Testis (tissue), 5 donors: ENCODE measurements at regions of chr11 and their contacts with region 1.

Region 1: DNA sequence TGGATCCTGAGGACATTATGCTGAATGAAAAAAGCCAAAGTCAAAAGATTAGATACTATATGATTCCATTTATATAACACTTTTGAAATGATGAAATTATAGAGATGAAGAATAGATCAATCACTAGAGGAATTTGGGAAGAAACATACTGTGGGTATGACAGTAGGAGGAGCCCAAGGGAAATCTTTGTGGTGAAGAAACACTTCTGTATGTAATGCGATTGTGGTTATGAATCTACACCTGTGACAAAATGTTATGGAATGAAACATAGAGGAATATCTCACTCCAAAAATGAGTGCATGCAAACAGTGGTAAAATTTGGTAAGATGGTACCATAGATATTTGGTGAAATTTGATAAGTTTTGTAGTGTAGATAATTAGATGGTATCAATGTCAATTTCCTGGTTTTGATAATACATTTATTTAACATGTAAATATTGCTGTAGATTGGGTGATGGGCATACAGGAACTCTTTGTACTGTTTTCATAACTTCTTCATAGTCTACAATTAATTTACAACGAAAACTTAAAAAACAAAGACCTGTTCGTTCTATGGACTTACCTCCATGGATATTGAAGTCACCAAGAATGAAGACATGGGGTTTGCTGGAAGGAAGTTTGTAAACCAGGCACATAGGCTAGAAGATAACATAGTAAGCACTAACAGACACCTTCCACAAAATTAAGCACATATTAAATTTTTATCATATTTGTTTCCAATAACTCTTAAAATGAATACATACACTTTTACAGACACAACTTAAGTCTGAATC is 11.5 kb downstream of the MRGPRX1 start:
- DNase-seq: no peak
- H3K4me3 ChIP-seq: no peak overlapping the region
- H3K27ac ChIP-seq: no peak overlapping the region
- H3K4me1 ChIP-seq: no peaks in the 10 kb centered on the region
- H3K27me3 ChIP-seq: no peaks in the 10 kb centered on the region
- CTCF ChIP-seq: no peak
- POLR2A ChIP-seq: no peak

Region 2: DNA sequence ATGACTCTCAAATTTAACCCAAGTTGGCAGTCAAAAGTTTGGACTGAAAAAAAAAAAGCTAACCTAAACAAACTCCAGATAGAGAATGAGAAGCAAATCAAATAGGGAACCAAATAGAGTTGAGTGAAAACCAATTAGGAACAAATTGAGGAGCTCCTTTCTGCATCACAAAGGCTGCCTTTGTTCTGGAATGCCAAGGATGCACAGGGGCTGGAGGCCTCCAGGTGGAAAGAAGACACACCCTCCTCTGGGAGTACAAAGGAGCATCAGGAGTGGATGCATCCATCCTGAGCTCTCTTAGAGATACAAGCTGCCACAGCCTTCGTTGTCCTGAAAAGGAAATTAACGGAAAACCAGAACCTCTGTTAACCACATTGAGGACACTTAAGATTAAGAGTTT is 61.8 kb before region 1 on chr11:
- intact Hi-C with region 1: loop called (anchors 10 kb)
- DNase-seq: no peak
- H3K4me3 ChIP-seq: no peak overlapping the region
- H3K27ac ChIP-seq: no peak overlapping the region
- H3K4me1 ChIP-seq: no peaks in the 10 kb centered on the region
- H3K27me3 ChIP-seq: no peaks in the 10 kb centered on the region
- CTCF ChIP-seq: no peak
- POLR2A ChIP-seq: no peak